ENCODE measurements at regions of chr19 and their contacts with region 1.

Region 1: GRCh38 chr19:43446746-43447489 is 18.5 kb downstream of the LYPD3 start:
- DNase-seq: peak; percentile 94

Region 2: DNA sequence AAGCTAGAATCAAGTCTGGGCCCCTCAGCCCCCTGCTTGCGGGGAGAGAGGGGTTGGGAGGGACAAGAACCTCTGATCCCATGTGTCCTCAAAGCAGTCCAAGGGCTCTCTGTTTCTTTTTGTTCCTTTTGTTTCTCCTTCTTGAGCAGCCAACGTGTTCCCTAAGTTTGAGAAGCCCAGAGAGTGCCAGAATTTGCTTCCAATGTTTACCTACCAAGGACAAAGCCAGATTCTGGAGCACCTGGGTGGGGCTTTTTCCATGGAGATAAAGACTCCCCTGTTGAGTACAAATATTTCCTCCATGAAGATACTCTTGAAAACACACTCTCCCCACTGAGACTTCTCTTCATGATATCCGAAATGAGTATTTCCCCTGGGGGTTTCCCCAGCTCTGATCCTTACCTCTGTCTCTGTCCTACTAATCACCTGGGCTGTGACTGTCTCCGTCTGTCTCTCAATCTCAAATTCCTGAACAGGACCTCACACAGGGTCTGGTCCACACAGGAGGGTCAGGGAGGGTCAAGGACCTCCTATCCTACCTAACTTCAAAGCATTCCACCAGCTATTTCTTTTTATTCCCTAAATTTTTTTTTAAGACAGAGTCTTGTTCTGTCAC is 66.0 kb before region 1 on chr19:
- intact Hi-C with region 1: no loop called
- DNase-seq: no peak

Region 3: GRCh38 chr19:43503501-43504425 is 56.8 kb after region 1 on chr19:
- intact Hi-C with region 1: loop called in 1 of 2 experiments (anchors 10 kb)
- DNase-seq: peak; percentile 99

Region 4: DNA sequence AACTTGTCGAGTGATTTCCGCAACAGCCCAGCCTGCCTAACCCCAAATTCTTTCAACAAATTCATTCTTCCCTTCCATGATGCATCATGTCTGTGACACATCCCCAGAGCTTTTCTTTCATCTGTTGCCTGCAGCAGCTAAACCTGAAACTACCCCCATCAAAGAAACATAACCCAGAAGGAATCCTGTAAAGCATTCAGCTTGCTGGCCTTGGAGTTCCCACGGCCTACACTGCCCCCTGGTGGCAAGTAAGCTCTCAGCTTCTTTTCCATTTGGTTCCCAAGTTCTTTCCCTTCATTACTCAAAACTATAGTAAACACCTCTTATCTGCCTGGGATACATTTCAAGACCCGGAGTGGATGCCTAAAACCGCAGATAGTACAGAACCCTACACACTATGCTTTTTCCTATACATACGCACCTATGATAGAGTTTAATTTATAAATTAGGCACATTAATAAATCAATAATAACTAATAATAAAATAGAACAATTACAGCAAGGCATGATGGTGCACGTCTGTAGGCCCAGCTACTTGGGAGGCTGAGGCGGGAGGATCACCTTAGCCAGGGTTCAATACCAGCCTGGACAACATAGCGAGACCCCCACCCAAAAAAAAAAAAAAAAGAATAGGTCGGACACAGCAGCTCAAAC is 72.6 kb after region 1 on chr19:
- intact Hi-C with region 1: loop called (anchors 2 to 5 kb)
- DNase-seq: peak; percentile 93

Region 5: DNA sequence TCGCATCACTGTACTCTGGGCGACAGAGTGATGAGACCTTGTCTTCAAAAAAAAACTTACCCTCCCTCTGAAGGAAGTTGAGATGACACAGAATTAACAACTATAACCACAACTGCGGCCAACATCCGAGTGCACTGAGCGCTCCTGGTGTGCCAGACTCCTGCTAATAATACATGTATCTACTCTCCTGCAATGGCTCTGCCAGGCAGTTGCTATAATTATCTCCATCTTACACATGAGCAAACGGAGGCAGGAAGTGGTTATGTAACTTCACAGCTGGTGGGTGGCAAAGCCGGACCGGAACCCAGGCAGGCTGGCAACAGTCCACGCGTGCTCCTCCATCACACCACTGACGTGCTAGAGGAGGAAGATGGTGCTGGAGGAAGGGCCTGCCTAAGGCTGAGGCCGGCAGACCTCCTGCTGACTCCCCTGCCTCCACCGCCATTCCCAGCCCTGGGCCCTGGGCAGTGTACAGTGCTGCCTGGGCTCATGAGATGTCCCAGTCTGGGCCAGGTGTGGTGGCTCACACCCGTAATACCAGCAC is 115.9 kb after region 1 on chr19:
- intact Hi-C with region 1: no loop called
- DNase-seq: peak; percentile 94